Breast epithelium (tissue), 4 donors: ENCODE measurements at regions of chr11 and their contacts with region 1.

Region 1: GRCh38 chr11:2699531-2700414 is at the start of gene KCNQ1OT1:
- DNase-seq: peak; percentile 91 to 94
- H3K4me3 ChIP-seq: peak within 1 kb of the TSS; percentile 64 to 74 (median 72)
- H3K27ac ChIP-seq: peak within 1 kb of the TSS; percentile 88 to 98
- H3K4me1 ChIP-seq: no peaks in the 10 kb centered on the region
- H3K27me3 ChIP-seq: no peaks in the 10 kb centered on the region
- CTCF ChIP-seq: no peak
- POLR2A ChIP-seq: peak; percentile 85
- total RNA-seq, gene KCNQ1OT1: 2.1 to 5.3 (median 3.6) TPM

Region 2: DNA sequence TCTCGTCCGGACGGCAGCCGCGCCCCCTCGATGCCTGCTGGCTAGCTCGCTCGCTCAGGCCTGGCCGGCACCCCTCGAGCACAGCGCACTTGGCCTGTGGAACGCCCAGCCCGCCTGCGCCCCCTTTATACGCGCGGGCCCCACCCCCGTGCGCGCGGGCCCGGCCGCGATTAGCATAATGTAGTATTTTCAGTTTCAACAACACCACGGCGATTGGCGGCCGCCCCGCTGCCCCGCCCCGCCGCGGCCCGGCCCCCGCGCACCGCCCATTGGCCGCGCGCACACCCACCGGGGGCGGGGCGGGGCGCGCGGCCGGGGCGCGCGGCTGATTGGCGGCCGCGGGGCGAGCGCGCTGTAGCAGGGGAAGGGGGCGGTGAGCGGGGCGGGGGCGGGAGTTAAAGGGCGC is 185.9 kb after region 1 on chr11 and contains the start of gene CDKN1C:
- intact Hi-C with region 1: loop called (anchors 10 kb)
- DNase-seq: peak; percentile 86 to 88
- H3K4me3 ChIP-seq: peak within 1 kb of the TSS; percentile 70 to 98 (median 89)
- H3K27ac ChIP-seq: peak within 1 kb of the TSS; percentile 86 to 95
- H3K4me1 ChIP-seq: peaks cover 4 to 9% of the 10 kb centered on the region in 2 donors
- H3K27me3 ChIP-seq: no peaks in the 10 kb centered on the region
- CTCF ChIP-seq: no peak
- POLR2A ChIP-seq: peak; percentile 70
- total RNA-seq, gene CDKN1C: 48.2 to 136 (median 88.8) TPM